GM10248 (cell line): ENCODE measurements at regions of chr9 and their contacts with region 1.

Region 1: DNA sequence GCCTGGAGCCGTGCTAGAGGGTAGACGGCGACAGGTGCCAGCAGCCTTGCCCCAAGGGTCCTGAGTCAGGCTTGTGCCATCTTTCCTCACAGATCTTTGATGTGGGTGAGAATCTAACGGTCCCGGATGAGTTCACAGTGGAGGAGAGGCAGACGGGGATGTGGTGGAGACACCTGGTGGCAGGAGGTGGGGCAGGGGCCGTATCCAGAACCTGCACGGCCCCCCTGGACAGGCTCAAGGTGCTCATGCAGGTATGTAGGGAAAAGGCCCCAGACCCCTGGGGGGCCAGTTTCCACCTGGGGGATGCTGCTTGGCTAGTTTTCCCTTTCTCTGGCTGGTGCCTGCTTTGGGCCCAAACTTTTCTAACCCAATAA is 24.0 kb downstream of the PTGES2 start:
- DNase-seq: no peak
- CTCF ChIP-seq: peak; percentile 6

Region 2: GRCh38 chr9:128127990-128128835 is 24.6 kb after region 1 on chr9:
- CTCF ChIA-PET with region 1: interaction called, 26 read pairs
- POLR2A ChIA-PET with region 1: no interaction called
- DNase-seq: peak; percentile 91
- CTCF ChIP-seq: no peak